Ascending aorta (tissue), 2 donors: ENCODE measurements at regions of chr9 and their contacts with region 1.

Region 1: DNA sequence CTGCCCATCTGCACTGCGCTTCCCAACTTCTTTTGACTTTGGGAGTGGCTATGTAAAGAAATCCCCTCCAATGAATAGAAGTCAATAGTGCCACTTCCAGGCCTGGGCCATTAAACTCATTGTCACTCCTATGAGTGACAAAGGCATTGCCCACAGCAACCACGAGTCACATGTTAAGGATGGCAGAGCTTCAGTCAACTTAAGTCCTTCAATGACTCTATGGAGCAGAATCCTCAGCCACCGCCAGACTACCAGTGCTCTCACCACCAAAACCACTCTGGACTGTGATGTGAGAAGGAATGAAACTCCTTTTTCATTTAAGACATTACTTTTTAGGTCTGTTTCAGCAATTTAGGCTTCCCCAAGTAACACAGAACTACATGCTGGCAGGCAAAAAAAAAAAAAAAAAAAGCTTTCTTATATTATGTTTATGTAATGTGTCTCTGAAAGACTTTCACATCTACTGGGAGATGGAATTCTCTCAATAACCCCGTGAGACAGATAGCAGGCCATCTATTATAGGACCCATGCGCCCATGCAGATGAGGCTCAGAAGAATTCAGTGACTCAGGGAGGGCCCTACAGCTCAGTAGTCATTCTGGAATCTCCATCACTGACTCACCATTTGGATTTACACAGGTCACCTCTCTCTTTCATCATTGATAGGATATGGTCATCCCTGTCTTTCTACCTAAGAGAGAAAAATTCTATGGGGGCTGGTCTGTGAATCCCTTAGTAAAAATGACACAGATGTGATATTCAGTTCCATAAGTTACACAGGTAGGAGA is 180.5 kb downstream of the CEMIP2 start:
- DNase-seq: no peak
- H3K4me3 ChIP-seq: no peak overlapping the region
- H3K27ac ChIP-seq: no peak overlapping the region
- H3K4me1 ChIP-seq: no peaks in the 10 kb centered on the region
- H3K27me3 ChIP-seq: no peaks in the 10 kb centered on the region
- CTCF ChIP-seq: no peak

Region 2: DNA sequence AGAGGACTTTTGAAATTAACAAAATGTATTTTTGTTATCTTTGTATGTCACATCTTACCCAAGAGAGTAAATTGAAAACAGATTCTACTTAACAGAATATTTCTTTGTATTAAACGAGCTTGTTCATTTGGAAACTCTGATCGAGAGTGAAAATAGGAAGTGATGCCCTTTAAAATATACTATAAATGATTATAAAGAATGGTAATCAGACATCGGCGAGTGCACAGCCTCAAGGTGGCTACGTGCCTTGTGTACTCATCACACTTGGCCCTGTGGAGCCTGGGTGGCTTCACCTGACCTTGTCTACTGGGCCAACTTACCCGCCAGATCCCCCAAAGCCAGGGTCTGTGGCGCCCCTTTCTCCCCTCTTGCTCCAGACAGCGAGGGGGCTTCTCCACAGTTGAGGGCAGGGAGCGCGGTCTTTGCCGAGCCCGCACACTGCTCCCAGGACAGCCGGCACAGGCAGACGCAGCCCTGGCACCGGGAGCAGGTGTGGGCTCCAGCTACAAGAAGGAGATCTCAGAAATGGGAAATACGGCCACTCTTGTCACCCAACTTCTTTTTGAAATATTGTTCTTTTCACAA is 62.7 kb before region 1 on chr9:
- intact Hi-C with region 1: loop called (anchors 10 kb)
- DNase-seq: no peak
- H3K4me3 ChIP-seq: no peak overlapping the region
- H3K27ac ChIP-seq: no peak overlapping the region
- H3K4me1 ChIP-seq: no peaks in the 10 kb centered on the region
- H3K27me3 ChIP-seq: no peaks in the 10 kb centered on the region
- CTCF ChIP-seq: no peak

Region 3: DNA sequence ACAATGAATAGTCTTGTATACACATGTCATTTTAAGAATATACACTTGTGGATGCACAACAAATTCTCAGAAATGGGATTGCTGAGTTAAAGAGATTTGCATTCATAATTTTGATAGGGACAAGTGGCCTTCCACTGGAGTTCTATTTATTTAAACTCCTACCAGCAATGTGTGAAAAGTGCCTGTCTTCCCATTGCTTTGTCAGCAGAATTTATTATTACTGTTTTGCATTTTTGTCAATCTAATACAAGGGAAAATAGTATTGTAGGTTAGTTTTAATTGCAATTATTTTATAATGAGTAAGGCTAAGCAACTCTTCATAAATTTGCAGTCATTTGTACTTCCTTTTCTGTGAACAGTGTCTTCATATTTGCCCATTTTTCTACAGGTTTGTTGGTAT is 417.7 kb after region 1 on chr9:
- intact Hi-C with region 1: no loop called
- DNase-seq: no peak
- H3K4me3 ChIP-seq: no peak overlapping the region
- H3K27ac ChIP-seq: no peak overlapping the region
- H3K4me1 ChIP-seq: no peaks in the 10 kb centered on the region
- H3K27me3 ChIP-seq: no peaks in the 10 kb centered on the region
- CTCF ChIP-seq: no peak